Aorta (tissue), 5 donors: ENCODE measurements at regions of chr2 and their contacts with region 1.

Region 1: DNA sequence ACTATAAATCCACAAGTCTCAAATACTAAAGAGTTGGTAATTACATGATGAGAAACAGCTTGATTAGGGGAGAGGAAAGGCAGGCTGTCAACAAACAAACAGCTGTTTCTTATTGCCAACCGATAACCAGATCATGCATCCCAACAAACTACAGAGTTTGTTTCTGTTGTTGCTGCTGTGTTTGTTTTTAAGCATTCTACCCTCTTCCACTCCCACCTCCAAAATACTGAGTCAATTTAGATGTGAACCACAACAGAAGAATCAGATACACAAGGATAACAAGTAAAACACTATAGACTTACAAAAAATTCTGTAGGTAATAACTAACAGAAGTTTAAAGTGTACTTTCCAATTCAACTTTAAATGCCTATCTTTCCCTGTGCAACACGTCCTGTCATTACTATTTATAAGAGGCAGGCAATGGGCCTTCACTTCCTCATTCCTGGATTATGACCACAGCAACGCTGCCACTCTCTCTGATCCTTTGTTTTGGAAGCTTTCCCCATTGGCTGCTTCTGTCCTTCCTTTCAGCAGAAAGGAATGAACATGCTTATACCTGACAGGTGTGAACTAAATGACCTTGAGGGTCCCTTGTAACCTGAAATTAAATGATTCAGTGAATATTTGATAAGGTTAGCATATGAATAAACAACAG is 152.0 kb downstream of the SRBD1 start:
- DNase-seq: peak in 1 of 2 donors; percentile 49
- ATAC-seq: no peak
- H3K4me3 ChIP-seq: peak overlapping the region in 1 of 2 donors; percentile 18
- H3K27ac ChIP-seq: peak overlapping the region in 1 of 2 donors; percentile 57
- H3K4me1 ChIP-seq: peaks cover 2 to 6% of the 10 kb centered on the region in 2 donors
- H3K27me3 ChIP-seq: no peaks in the 10 kb centered on the region

Region 2: GRCh38 chr2:45382744-45383143 is 76.3 kb before region 1 on chr2:
- intact Hi-C with region 1: loop called in 1 of 2 experiments (anchors 10 kb)
- DNase-seq: no peak
- ATAC-seq: no peak
- H3K4me3 ChIP-seq: no peak overlapping the region
- H3K27ac ChIP-seq: no peak overlapping the region
- H3K4me1 ChIP-seq: peaks cover 0 to 5% of the 10 kb centered on the region in 2 donors
- H3K27me3 ChIP-seq: no peaks in the 10 kb centered on the region